CD8-positive, alpha-beta memory T cell (primary cell): ENCODE measurements at regions of chr1 and their contacts with region 1.

Region 1: GRCh38 chr1:40241362-40241761 is 6.4 kb upstream of the TMCO2 start:
- DNase-seq: no peak
- H3K4me3 ChIP-seq: no peak overlapping the region
- H3K4me3 Mint-ChIP-seq: peak overlapping the region in 4 of 7 donors; percentile 12 to 47 (median 29)
- H3K27ac ChIP-seq: no peak overlapping the region
- H3K27ac Mint-ChIP-seq: peak overlapping the region; percentile 0 to 84 (median 68)
- H3K4me1 ChIP-seq: peaks cover 16% of the 10 kb centered on the region
- H3K4me1 Mint-ChIP-seq: peaks cover 8 to 15% (median 15%) of the 10 kb centered on the region in 3 donors
- H3K27me3 ChIP-seq: no peaks in the 10 kb centered on the region
- H3K27me3 Mint-ChIP-seq: no peaks in the 10 kb centered on the region

Region 2: DNA sequence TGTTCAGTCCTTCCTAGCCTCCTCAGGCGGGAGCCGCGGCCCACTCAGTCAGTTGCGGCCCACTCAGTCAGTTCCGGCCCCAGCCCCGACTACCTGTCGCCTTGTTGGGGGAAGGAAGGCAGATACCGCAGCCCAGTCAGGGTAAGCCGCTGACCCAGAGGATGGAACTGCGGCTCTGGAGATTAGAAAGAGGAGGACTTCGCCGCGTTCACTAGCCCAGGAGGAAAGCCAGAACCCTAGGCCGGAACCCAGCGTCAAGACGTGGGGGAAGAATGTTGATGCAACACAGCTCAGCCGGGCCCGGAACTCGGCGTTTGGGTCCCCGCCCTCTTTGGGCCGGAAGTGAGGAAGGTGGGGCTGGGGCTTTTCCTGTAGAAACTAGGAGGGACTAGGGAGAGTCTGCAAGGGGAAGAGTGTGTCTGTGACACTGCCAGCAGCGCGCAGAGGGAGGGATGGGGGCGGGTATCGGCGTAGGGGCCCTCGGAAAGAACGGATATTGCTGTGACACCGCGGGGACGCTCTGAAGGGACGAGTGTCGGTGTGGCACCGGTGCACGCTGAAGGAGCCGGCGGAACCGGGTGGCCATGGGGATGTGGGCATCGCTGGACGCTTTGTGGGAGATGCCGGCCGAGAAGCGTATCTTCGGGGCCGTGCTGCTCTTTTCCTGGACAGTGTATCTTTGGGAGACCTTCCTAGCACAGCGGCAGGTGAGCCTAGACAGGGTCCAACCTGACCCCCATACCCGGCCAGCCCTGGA is 16.5 kb after region 1 on chr1 and contains the start of gene ZMPSTE24:
- CTCF ChIA-PET with region 1: interaction called, 11 read pairs
- POLR2A ChIA-PET with region 1: interaction called, 12 read pairs
- DNase-seq: peak; percentile 91 to 98 (median 95)
- H3K4me3 ChIP-seq: peak within 1 kb of the TSS; percentile 100
- H3K4me3 Mint-ChIP-seq: peak within 1 kb of the TSS; percentile 96 to 100 (median 98)
- H3K27ac ChIP-seq: peak within 1 kb of the TSS; percentile 99
- H3K27ac Mint-ChIP-seq: peak within 1 kb of the TSS; percentile 99 to 100 (median 100)
- H3K4me1 ChIP-seq: peaks cover 25% of the 10 kb centered on the region
- H3K4me1 Mint-ChIP-seq: peaks cover 46 to 67% (median 64%) of the 10 kb centered on the region in 3 donors
- H3K27me3 ChIP-seq: no peaks in the 10 kb centered on the region
- H3K27me3 Mint-ChIP-seq: peaks cover 0 to 3% of the 10 kb centered on the region in 2 donors
- total RNA-seq, gene ZMPSTE24: 51.0 to 53.7 TPM

Region 3: DNA sequence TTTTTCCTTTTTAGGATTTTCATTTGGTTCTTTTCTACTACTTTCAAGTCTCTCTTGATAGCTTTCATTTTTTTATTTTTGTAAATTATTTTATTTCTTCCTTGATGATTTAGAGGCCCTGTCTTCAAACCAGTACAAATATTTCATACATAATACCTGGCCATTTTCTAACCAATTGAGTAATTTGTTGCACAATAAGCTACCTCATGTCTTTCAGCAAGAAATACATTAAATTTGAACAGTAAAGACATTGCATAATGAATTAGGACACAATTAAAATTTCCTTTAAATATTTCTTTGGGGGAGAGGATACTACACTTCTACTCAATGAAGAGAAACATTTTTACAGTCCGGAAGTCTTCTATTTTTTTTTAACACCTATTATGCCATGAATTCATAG is 91.3 kb after region 1 on chr1:
- CTCF ChIA-PET with region 1: no interaction called
- POLR2A ChIA-PET with region 1: no interaction called
- DNase-seq: no peak
- H3K4me3 ChIP-seq: no peak overlapping the region
- H3K4me3 Mint-ChIP-seq: no peak overlapping the region
- H3K27ac ChIP-seq: no peak overlapping the region
- H3K27ac Mint-ChIP-seq: no peak overlapping the region
- H3K4me1 ChIP-seq: no peaks in the 10 kb centered on the region
- H3K4me1 Mint-ChIP-seq: no peaks in the 10 kb centered on the region
- H3K27me3 ChIP-seq: peaks cover 2% of the 10 kb centered on the region
- H3K27me3 Mint-ChIP-seq: peaks cover 0 to 3% of the 10 kb centered on the region in 2 donors